ENCODE measurements at regions of chr17 and their contacts with region 1.

Region 1: GRCh38 chr17:38824899-38825761 is at the start of gene CWC25:
- DNase-seq: peak; percentile 94 to 99 (median 97)
- H3K4me3 ChIP-seq: peak within 1 kb of the TSS; percentile 71 to 89
- H3K4me3 Mint-ChIP-seq: peak within 1 kb of the TSS; percentile 94 to 99 (median 98)
- H3K27ac ChIP-seq: peak within 1 kb of the TSS; percentile 98
- H3K27ac Mint-ChIP-seq: peak within 1 kb of the TSS; percentile 99 to 100 (median 100)
- H3K4me1 ChIP-seq: peaks cover 23% of the 10 kb centered on the region
- H3K4me1 Mint-ChIP-seq: peaks cover 15 to 42% (median 30%) of the 10 kb centered on the region in 4 donors
- H3K27me3 ChIP-seq: no peaks in the 10 kb centered on the region
- H3K27me3 Mint-ChIP-seq: peaks cover 0 to 5% of the 10 kb centered on the region in 2 donors
- total RNA-seq, gene CWC25: 44.4 to 46.8 TPM

Region 2: DNA sequence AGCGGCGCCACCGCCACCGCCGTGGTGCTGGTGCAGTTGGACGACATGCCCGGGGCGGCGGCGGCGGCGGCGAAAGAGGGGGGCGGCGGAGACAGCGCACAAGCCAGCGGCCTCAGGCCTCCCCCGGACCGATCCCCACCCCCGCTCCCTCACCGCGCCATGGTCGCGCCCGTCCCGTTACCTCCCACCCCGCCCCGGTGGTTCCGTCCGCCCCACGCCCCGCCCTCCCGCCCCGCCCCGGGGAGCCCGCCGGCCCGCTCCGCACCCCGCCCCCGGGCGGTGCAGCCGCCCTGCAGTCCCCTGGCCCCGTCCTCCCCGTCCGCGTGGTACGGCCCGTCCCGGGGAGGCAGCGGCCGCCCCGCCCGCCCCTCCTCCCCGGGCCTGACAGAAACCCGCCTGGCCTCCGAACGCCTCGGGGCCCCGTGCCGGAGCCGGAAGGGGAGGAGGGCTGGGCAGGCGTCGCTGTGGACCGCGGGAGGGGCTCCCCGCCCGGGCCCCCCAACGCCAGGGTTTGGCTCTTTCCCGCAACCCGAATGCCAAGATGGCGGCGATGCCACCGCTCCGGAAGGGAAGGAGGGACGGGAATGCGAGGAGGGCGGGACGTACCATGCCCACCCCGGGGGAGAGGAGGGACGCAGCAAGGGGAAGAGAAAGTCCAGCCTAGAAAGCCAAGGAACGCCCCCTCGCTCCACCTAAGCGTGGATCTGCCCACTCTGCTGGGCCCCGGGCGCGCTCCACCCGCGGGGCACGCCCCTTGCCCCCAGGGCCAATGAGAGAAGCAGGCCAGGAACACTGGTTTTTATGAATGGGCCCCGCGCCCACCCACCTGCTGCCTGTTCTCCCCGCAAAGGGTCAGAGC is 25.5 kb before region 1 on chr17 and contains the start of gene PIP4K2B:
- CTCF ChIA-PET with region 1: interaction called, 3 read pairs
- POLR2A ChIA-PET with region 1: interaction called, 7 read pairs
- intact Hi-C with region 1: loop called (anchors 1 kb)
- DNase-seq: peak; percentile 81 to 88 (median 83)
- H3K4me3 ChIP-seq: peak within 1 kb of the TSS; percentile 76 to 84
- H3K4me3 Mint-ChIP-seq: peak within 1 kb of the TSS; percentile 91 to 98 (median 94)
- H3K27ac ChIP-seq: peak within 1 kb of the TSS; percentile 76
- H3K27ac Mint-ChIP-seq: peak within 1 kb of the TSS; percentile 89 to 96 (median 93)
- H3K4me1 ChIP-seq: peaks cover 27% of the 10 kb centered on the region
- H3K4me1 Mint-ChIP-seq: peaks cover 30 to 46% (median 36%) of the 10 kb centered on the region in 4 donors
- H3K27me3 ChIP-seq: no peaks in the 10 kb centered on the region
- H3K27me3 Mint-ChIP-seq: no peaks in the 10 kb centered on the region
- total RNA-seq, gene PIP4K2B: 55.9 to 66.3 TPM

Measured in CD4-positive, alpha-beta memory T cell (primary cell).